CD4-positive, alpha-beta memory T cell (primary cell): ENCODE measurements at regions of chr13 and their contacts with region 1.

Region 1: DNA sequence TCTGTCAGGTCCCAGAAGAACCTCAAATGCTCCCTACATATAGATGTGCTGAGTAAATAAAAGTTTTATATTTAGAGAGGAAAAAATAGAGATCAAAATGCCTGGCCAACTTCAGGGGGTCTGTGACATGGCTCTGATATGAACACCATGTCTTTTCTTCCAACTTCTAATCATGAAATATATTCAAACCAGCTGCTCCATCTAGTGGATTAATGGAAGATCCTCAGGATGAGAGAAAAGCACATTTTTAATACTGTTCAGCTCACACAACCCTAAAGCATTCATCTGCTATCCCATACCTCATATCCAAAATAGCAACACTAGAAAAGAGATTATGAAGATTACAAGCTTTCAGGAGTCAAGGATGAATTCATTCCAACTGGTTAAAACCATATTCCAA is 56.0 kb upstream of the DOCK9 start:
- DNase-seq: peak in 2 of 5 donors; percentile 21 to 28
- H3K4me3 ChIP-seq: no peak overlapping the region
- H3K4me3 Mint-ChIP-seq: no peak overlapping the region
- H3K27ac ChIP-seq: no peak overlapping the region
- H3K27ac Mint-ChIP-seq: peak overlapping the region in 3 of 7 donors; percentile 55 to 85 (median 63)
- H3K4me1 ChIP-seq: peaks cover 22% of the 10 kb centered on the region
- H3K4me1 Mint-ChIP-seq: peaks cover 32 to 76% (median 51%) of the 10 kb centered on the region in 4 donors
- H3K27me3 ChIP-seq: no peaks in the 10 kb centered on the region
- H3K27me3 Mint-ChIP-seq: no peaks in the 10 kb centered on the region

Region 2: DNA sequence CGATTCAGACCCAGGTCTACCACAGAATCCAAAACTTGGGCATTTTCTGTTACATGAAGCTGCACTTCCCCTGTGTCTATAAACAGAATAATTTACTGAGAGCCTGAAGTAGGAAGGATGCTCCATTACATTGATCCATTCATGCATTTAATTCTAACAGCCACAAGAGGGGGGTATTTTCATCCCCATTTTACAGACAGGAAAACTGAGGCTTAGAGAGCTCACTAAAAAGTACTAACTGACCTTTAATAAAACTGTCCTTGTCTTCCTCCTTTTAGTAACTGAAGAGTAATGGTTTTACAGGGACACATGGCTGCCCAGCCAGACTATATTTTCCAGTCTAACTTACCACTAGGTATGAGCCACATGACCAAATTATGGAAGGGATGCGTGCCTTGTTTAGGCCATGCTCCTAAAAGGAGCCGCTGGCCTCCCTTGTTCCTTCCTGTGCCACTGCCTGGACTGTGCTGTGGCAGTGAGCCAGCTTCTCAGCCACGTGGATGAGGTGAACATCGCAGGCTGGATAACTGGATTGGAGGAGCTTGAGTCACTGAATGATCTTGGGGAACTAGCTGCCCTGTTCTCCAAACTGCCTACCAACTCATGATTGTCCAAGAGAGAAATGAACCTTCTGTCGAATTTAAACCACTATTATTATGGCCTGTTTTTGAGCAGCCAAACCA is 164.3 kb before region 1 on chr13:
- CTCF ChIA-PET with region 1: interaction called, 41 read pairs
- POLR2A ChIA-PET with region 1: interaction called, 3 read pairs
- intact Hi-C with region 1: loop called (anchors 1 kb)
- DNase-seq: peak in 3 of 5 donors; percentile 6 to 11 (median 10)
- H3K4me3 ChIP-seq: no peak overlapping the region
- H3K4me3 Mint-ChIP-seq: no peak overlapping the region
- H3K27ac ChIP-seq: no peak overlapping the region
- H3K27ac Mint-ChIP-seq: peak overlapping the region in 2 of 7 donors; percentile 6 to 41
- H3K4me1 ChIP-seq: no peaks in the 10 kb centered on the region
- H3K4me1 Mint-ChIP-seq: peaks cover 0 to 4% (median 3%) of the 10 kb centered on the region in 4 donors
- H3K27me3 ChIP-seq: no peaks in the 10 kb centered on the region
- H3K27me3 Mint-ChIP-seq: no peaks in the 10 kb centered on the region

Region 3: DNA sequence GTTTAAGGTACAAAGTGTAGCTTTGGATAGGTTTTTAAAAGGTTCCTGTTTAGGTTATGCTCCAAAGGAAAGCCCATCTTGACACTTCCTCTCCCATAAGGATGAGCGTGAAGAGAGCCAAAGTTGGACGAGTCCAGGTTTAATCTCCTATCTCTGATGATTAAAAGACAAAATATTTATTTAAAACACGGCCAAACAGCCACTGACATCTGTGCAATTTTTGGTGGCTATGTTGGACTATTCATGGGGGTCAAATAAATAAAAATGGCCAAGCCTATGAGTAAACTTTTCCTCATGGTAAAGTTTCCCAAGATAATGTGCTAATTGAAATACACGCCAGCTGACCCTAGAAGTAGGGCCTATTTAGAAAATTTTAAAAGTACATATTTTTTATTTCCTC is 13.0 kb after region 1 on chr13:
- CTCF ChIA-PET with region 1: interaction called, 38 read pairs
- POLR2A ChIA-PET with region 1: interaction called, 5 read pairs
- intact Hi-C with region 1: loop called (anchors 1 kb)
- DNase-seq: no peak
- H3K4me3 ChIP-seq: peak overlapping the region; percentile 1 to 32
- H3K4me3 Mint-ChIP-seq: peak overlapping the region; percentile 70 to 90 (median 81)
- H3K27ac ChIP-seq: peak overlapping the region; percentile 71
- H3K27ac Mint-ChIP-seq: peak overlapping the region; percentile 91 to 98 (median 95)
- H3K4me1 ChIP-seq: peaks cover 99% of the 10 kb centered on the region
- H3K4me1 Mint-ChIP-seq: peaks cover 79 to 100% (median 89%) of the 10 kb centered on the region in 4 donors
- H3K27me3 ChIP-seq: no peaks in the 10 kb centered on the region
- H3K27me3 Mint-ChIP-seq: no peaks in the 10 kb centered on the region

Region 4: GRCh38 chr13:99067160-99067985 is 33.6 kb after region 1 on chr13:
- CTCF ChIA-PET with region 1: interaction called, 13 read pairs
- POLR2A ChIA-PET with region 1: no interaction called
- intact Hi-C with region 1: no loop called
- DNase-seq: no peak
- H3K4me3 ChIP-seq: no peak overlapping the region
- H3K4me3 Mint-ChIP-seq: peak overlapping the region in 7 of 8 donors; percentile 42 to 75 (median 67)
- H3K27ac ChIP-seq: no peak overlapping the region
- H3K27ac Mint-ChIP-seq: peak overlapping the region; percentile 56 to 86 (median 82)
- H3K4me1 ChIP-seq: peaks cover 55% of the 10 kb centered on the region
- H3K4me1 Mint-ChIP-seq: peaks cover 56 to 93% (median 74%) of the 10 kb centered on the region in 4 donors
- H3K27me3 ChIP-seq: no peaks in the 10 kb centered on the region
- H3K27me3 Mint-ChIP-seq: no peaks in the 10 kb centered on the region

Region 5: DNA sequence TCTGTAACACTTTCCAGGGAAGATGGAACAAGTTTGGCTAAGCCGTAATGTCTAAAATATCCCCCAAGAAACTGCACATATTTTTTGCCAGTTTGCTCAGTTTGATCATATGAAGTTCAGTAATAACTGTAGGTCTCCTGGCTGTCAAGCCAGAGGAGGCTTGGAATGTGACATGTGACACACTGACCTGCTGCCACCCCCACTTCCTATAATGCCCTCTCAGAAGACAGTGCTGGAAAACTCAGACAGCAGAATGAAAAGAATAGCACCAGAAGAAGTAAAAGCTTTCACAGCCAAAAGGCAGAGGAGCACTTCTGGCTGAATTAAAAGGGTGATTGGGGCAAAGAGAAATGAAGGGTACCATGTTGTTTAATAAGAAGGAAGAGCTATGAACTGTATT is 99.4 kb after region 1 on chr13:
- CTCF ChIA-PET with region 1: interaction called, 8 read pairs
- POLR2A ChIA-PET with region 1: no interaction called
- intact Hi-C with region 1: loop called (anchors 1 kb)
- DNase-seq: no peak
- H3K4me3 ChIP-seq: no peak overlapping the region
- H3K4me3 Mint-ChIP-seq: no peak overlapping the region
- H3K27ac ChIP-seq: no peak overlapping the region
- H3K27ac Mint-ChIP-seq: peak overlapping the region in 2 of 7 donors; percentile 13 to 25
- H3K4me1 ChIP-seq: no peaks in the 10 kb centered on the region
- H3K4me1 Mint-ChIP-seq: peaks cover 0 to 3% (median 0%) of the 10 kb centered on the region in 4 donors
- H3K27me3 ChIP-seq: no peaks in the 10 kb centered on the region
- H3K27me3 Mint-ChIP-seq: no peaks in the 10 kb centered on the region

Region 6: DNA sequence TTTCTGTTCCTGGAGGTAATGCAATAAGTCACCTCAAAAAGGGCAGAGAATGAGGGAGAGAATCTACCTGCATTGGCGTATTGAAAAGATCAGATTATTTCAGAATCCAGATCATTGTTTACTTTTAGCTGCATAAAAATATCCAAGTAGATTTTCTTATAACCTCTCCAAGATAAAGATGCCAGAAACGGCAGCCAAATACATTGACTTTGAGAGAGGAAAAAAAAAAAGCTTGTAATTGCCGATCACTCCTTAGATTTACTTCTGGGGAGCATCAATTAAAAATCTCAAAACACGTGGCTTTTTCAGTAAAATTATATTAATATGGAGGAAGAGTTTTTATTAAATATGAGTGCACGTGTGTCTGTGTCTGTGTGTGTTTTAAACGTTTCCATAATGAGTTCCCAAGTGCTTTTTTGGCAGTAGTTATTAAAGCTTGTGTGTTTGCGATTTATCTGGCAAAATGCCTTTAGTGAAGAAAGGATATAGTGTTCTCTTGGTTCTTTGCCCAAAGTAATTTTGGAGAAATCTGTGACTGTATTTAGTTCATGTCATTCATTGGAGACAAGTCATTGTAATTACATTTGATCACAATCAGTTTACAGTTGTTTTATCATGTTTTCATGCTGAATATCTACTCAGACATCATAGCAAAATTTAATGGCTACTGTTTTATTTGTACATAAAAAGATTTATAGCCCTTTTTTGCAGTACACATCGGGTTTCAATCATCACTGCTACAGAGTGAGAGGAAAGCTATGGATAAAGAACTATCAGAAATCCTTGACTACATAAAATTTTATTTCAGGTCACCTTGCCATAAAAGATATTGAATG is 643.5 kb after region 1 on chr13:
- CTCF ChIA-PET with region 1: no interaction called
- POLR2A ChIA-PET with region 1: no interaction called
- intact Hi-C with region 1: no loop called
- DNase-seq: no peak
- H3K4me3 ChIP-seq: no peak overlapping the region
- H3K4me3 Mint-ChIP-seq: no peak overlapping the region
- H3K27ac ChIP-seq: no peak overlapping the region
- H3K27ac Mint-ChIP-seq: no peak overlapping the region
- H3K4me1 ChIP-seq: no peaks in the 10 kb centered on the region
- H3K4me1 Mint-ChIP-seq: peaks cover 0 to 3% (median 0%) of the 10 kb centered on the region in 4 donors
- H3K27me3 ChIP-seq: no peaks in the 10 kb centered on the region
- H3K27me3 Mint-ChIP-seq: no peaks in the 10 kb centered on the region